ENCODE measurements at regions of chr11 and their contacts with region 1.

Region 1: DNA sequence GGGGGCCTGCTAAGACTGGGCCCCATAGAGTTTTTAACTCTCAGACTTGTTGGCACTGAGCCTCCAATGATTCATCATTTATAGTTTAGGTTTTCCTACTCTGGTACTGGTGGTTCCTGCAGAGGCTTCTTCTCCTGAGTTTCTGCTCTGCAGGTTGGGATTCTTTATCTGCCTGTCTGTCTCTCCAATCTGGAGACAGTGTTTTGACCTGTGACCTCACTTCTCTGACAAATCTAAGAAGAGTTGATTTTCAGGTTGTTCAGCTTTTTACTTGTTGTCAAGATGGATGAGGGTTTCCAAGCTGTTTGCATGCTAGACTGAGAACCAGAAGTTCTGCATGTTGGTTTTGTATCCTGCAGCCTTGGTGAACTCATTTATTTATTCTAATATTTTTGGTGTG is 63.9 kb downstream of the JAM3 start:
- DNase-seq: peak; percentile 21
- H3K4me3 ChIP-seq: no peak overlapping the region
- H3K27ac ChIP-seq: no peak overlapping the region
- H3K4me1 ChIP-seq: no peaks in the 10 kb centered on the region
- H3K27me3 ChIP-seq: no peaks in the 10 kb centered on the region
- CTCF ChIP-seq: no peak
- EP300 ChIP-seq: no peak
- POLR2A ChIP-seq: no peak

Region 2: DNA sequence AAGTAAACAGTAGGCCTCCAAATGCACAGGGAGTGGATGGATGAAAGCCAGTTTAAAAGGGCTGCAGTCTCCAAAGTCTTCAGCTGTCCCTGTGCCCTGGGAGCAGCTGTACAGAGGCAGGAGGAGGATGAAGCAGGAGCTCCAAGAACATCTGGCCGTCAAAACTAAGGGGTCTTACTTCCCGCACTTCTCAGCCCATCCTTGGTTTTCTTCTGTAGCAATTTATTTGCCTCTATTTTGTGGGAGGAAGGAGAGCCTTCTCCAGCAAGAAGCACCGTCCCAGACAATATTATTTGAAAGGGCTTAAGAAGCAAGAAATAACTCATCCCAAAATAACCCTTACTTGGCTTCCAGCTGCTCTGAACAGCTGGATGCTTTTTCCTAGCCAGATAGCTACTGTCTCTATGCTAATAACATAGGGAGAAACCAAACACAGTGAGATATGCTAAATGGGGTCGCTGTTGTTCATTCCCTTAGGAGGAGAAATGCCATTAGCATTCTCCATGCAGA is 420.7 kb before region 1 on chr11:
- intact Hi-C with region 1: no loop called
- DNase-seq: no peak
- H3K4me3 ChIP-seq: no peak overlapping the region
- H3K27ac ChIP-seq: no peak overlapping the region
- H3K4me1 ChIP-seq: peaks cover 0 to 4% (median 0%) of the 10 kb centered on the region in 4 donors
- H3K27me3 ChIP-seq: peaks cover 0 to 47% (median 0%) of the 10 kb centered on the region in 4 donors
- CTCF ChIP-seq: no peak
- EP300 ChIP-seq: no peak
- POLR2A ChIP-seq: no peak

Region 3: GRCh38 chr11:133927690-133928627 is 204.8 kb before region 1 on chr11:
- intact Hi-C with region 1: loop called (anchors 5 kb)
- DNase-seq: no peak
- H3K4me3 ChIP-seq: peak overlapping the region in 2 of 4 donors; percentile 29 to 32
- H3K27ac ChIP-seq: peak overlapping the region; percentile 66 to 77 (median 70)
- H3K4me1 ChIP-seq: peaks cover 13 to 47% (median 43%) of the 10 kb centered on the region in 4 donors
- H3K27me3 ChIP-seq: peaks cover 0 to 4% (median 0%) of the 10 kb centered on the region in 4 donors
- CTCF ChIP-seq: peak; percentile 74 to 95 (median 85)
- EP300 ChIP-seq: no peak
- POLR2A ChIP-seq: no peak

Region 4: DNA sequence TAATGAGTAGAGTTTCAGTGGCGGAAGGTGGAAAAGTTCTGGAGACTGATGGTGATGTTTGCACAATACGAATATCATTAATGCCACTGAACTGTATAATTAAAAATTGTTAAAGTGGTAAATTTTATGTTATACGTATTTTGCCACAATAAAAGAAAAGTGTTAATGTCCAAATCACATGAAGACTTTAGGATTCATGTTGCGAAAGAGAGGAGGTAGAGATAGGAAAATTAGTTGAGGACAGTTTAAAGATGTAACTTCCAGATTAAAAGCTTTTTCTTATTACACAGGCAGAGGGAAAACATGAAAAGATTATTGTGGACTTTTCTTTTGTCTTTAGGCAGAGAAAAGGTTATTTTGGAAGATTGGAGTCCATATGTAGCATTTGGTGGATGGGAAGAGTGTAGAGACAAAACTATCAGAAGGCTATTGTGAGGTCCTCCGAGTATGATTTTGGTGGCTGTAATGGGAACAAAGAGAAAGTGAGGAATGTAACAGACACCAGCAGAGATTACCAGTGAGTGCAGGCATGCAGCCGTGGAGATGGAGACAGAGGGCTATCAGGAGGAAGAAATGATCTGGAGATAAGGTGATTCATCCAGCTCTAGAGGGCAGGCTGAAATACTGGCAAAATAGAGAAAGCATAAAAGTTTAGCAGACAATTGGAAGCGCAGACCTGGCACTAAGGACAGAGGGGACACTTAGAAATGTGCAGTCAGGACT is 104.2 kb after region 1 on chr11:
- intact Hi-C with region 1: no loop called
- DNase-seq: no peak
- H3K4me3 ChIP-seq: no peak overlapping the region
- H3K27ac ChIP-seq: no peak overlapping the region
- H3K4me1 ChIP-seq: peaks cover 0 to 8% (median 3%) of the 10 kb centered on the region in 4 donors
- H3K27me3 ChIP-seq: no peaks in the 10 kb centered on the region
- CTCF ChIP-seq: no peak
- EP300 ChIP-seq: no peak
- POLR2A ChIP-seq: no peak